ENCODE measurements at regions of chrX and their contacts with region 1.

Region 1: GRCh38 chrX:151985955-151986354 is 11.5 kb upstream of the GABRE start:
- DNase-seq: peak in 1 of 2 experiments; percentile 66
- H3K4me3 ChIP-seq: no peak overlapping the region
- H3K27ac ChIP-seq: peak overlapping the region; percentile 92
- H3K4me1 ChIP-seq: peaks cover 63% of the 10 kb centered on the region
- H3K27me3 ChIP-seq: no peaks in the 10 kb centered on the region
- CTCF ChIP-seq: no peak

Region 2: DNA sequence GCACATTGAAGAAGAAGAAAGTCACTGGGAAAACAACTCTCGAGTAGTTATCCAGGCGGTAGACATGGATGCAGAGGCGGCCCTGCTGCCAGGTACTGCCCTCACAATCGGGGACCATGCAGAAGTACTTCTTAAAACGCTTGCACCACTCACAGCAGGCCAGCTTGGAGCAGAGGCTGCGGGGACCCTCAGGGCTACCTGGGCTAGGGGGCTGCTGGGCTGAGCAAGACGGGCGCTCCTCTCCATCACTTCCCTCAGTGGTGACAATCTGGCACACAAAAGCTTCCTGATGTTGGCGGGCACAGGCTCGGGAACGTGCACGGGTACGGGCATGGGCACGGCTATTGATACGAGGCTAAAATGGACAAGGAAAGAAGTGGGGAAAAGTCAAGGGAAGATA is 31.2 kb before region 1 on chrX:
- CTCF ChIA-PET with region 1: no interaction called
- POLR2A ChIA-PET with region 1: no interaction called
- intact Hi-C with region 1: no loop called
- DNase-seq: no peak
- H3K4me3 ChIP-seq: no peak overlapping the region
- H3K27ac ChIP-seq: no peak overlapping the region
- H3K4me1 ChIP-seq: no peaks in the 10 kb centered on the region
- H3K27me3 ChIP-seq: no peaks in the 10 kb centered on the region
- CTCF ChIP-seq: no peak

Region 3: GRCh38 chrX:152025656-152026440 is 39.9 kb after region 1 on chrX:
- CTCF ChIA-PET with region 1: no interaction called
- POLR2A ChIA-PET with region 1: no interaction called
- intact Hi-C with region 1: loop called (anchors 2 kb)
- DNase-seq: peak in 1 of 2 experiments; percentile 72
- H3K4me3 ChIP-seq: no peak overlapping the region
- H3K27ac ChIP-seq: no peak overlapping the region
- H3K4me1 ChIP-seq: peaks cover 11% of the 10 kb centered on the region
- H3K27me3 ChIP-seq: no peaks in the 10 kb centered on the region
- CTCF ChIP-seq: no peak

Measured in PC-9 (cell line).